Heart right ventricle (tissue), 16 donors: ENCODE measurements at regions of chr11 and their contacts with region 1.

Region 1: DNA sequence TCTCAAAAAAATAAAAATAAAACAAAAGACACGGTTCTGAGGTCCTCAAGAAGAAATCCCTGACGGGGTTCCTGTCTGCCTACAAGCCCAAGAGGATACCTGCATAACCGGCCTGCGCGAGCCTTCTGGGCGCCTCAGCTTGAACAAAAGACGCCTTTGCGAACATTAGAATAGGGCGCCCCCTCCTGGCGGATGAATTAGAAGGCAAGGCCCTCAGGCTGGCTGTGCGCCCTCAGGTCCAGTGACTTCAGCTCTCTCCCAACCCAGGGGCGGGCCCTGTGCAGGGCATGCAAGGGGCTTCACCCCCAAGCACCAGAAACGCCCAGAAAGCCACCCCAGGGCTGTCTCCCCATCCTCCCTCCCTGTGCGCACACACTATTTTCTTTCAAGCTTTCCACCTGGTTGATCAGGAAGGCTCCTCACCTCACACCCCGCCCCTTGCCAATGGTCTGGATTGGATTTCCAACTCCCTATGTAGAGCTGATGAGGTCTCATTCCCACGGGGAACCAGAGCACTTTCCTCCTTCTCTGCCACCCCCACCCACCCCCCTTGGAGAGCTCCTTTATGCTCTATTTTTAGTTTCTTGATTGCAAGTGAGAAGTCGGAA is 273.3 kb downstream of the BUD13 start:
- DNase-seq: peak; percentile 54 to 70
- ATAC-seq: peak in 7 of 8 donors; percentile 39 to 80 (median 60)
- H3K4me3 ChIP-seq: no peak overlapping the region
- H3K27ac ChIP-seq: no peak overlapping the region
- H3K4me1 ChIP-seq: peaks cover 0 to 11% (median 5%) of the 10 kb centered on the region in 9 donors
- H3K27me3 ChIP-seq: peaks cover 0 to 53% (median 39%) of the 10 kb centered on the region in 7 donors
- CTCF ChIP-seq: peak; percentile 18 to 65 (median 61)

Region 2: DNA sequence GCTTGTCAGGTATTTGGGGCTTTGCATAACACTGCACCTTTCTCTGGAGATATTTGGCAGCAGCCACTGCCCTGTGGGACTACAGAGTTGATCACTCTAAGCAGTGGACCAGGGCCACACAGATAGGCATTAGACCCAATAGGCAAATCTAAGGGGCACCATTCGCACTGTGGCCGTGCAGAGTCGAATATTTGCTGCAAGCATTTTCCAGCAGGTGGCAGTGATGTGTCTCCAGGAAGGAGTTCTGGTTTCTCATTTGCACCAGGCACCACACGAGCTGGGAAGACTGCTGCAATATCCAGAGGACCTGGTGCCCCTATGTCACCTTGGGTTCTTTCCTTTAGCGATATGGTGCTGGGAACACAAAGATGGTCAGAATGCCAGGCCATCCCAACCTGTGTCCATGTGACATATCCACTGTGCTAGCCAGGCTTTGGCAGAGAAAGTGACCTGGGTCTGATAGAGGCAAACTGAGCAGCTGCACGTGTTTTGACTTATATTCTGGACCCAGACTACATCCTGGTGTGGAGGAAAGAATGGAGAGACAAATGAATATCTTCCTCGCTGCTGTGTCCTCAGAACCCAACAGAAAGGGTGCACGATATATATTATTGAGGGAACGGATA is 45.4 kb before region 1 on chr11:
- intact Hi-C with region 1: loop called in 2 of 10 experiments (anchors 5 kb)
- DNase-seq: peak in 1 of 2 donors; percentile 25
- ATAC-seq: peak in 5 of 8 donors; percentile 8 to 63 (median 42)
- H3K4me3 ChIP-seq: no peak overlapping the region
- H3K27ac ChIP-seq: no peak overlapping the region
- H3K4me1 ChIP-seq: peaks cover 0 to 2% (median 0%) of the 10 kb centered on the region in 9 donors
- H3K27me3 ChIP-seq: peaks cover 0 to 10% (median 0%) of the 10 kb centered on the region in 7 donors
- CTCF ChIP-seq: peak; percentile 33 to 68 (median 57)